Panc1 (cell line): ENCODE measurements at regions of chr19 and their contacts with region 1.

Region 1: DNA sequence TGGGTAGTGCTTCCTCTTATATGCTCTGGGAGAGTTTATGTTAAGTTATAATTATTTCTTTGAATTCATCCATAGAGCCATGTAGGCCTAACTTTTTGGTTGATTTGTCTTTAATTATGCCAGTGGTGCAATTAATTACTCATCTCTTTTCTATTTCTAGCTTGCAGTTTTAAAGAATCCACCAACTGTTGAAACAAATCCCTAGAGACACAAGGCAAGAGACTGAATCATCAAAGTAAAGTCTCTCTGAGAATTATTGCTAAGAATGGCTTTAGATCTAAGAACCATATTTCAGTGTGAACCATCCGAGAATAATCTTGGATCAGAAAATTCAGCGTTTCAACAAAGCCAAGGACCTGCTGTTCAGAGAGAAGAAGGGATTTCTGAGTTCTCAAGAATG is 5.9 kb upstream of the ZNF551 start:
- DNase-seq: no peak
- ATAC-seq: no peak
- H3K4me3 ChIP-seq: no peak overlapping the region
- H3K27ac ChIP-seq: no peak overlapping the region
- H3K4me1 ChIP-seq: no peaks in the 10 kb centered on the region
- H3K27me3 ChIP-seq: no peaks in the 10 kb centered on the region; the same call in 1 of the 2 replicates
- CTCF ChIP-seq: no peak

Region 2: DNA sequence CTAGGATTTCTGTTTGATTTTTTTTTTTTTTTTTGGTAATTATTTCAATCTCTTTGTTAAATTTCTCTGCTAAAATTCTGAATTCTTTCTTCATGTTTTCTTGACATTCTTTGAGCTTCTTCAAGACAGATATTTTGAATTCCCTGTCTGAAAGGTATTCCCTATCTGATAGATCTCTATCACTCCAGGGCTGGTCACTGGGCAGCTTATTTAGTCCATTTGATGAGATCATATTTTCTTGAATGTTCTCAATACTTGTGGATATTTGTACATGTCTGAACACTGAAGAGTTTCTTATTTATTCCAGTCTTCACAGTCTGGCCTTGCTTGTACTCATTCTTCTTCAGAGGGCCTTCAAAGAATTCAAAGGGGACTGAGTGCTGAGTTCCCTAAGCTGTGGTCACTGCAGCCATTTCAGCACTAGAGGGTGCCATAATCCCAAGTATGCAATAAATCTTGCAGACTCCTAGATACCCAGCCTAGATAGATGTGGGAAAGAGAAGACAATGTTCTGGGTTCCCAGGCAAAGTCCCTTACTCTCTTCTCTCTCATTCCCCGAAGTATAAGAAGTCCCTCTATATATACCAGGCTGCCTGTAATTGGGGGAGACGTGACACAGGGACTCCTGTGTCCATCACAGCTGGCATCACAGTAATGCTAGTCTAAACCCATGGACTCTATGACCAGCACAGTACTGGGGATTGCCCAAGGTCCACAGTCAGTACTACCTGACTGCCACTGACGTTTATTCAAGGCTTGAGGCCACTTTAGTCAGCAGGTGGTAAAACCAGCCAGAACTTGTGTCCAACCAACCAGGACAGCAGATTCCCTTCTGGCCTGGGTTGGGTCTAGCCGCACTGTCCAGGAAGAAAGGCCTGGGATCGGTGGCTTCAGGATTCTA is 210.1 kb before region 1 on chr19:
- CTCF ChIA-PET with region 1: no interaction called
- POLR2A ChIA-PET with region 1: interaction called, 15 read pairs
- in situ Hi-C with region 1: no loop called
- intact Hi-C with region 1: no loop called
- DNase-seq: no peak
- ATAC-seq: peak; percentile 88
- H3K4me3 ChIP-seq: no peak overlapping the region
- H3K27ac ChIP-seq: no peak overlapping the region
- H3K4me1 ChIP-seq: no peaks in the 10 kb centered on the region
- H3K27me3 ChIP-seq: no peaks in the 10 kb centered on the region
- CTCF ChIP-seq: peak; percentile 72

Region 3: DNA sequence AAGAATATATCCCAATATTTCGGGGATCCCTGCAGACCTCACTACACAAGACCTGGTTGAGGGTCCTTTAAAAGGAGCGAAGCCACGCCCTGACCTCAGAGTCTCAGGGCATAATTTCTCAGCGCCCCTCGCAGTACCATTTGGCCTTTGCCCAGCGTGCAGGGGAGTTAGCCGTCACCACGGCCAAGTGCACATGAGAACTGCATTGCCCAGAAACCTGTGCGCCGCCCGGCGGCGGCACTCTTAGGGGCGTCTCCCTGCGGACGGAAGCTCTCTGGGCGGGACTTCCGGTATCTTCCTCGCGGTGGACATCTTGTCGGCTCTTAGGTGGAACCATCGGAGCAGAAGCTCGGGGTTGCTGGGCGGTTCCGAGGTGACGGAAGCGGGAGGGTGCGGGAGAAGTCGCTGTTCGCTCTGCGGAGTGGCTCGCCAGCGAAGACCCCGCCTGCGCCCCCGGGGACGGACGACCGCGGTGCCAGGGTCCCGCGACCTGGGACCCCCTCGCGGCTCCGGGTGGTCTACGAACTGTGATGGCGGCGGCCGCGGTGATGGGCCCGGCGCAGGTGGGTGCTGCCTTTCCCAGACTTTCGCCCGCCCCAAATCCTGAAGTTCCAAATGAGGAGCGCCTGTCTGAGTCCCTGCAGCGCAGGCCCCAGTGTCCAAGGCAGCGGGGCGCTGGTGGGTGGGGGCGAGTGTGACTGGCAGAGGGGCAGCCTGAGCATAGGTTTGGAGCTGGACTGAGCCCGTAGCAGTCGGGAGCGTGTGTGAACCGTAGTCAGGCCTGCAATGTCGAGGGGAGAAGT is 61.7 kb before region 1 on chr19 and contains the start of gene ZNF134:
- CTCF ChIA-PET with region 1: no interaction called
- POLR2A ChIA-PET with region 1: no interaction called
- in situ Hi-C with region 1: loop called (anchors 10 kb)
- intact Hi-C with region 1: no loop called
- DNase-seq: peak; percentile 58
- ATAC-seq: peak; percentile 100
- H3K4me3 ChIP-seq: peak within 1 kb of the TSS; percentile 70 to 81
- H3K27ac ChIP-seq: peak within 1 kb of the TSS; percentile 75
- H3K4me1 ChIP-seq: no peaks in the 10 kb centered on the region
- H3K27me3 ChIP-seq: no peaks in the 10 kb centered on the region
- CTCF ChIP-seq: no peak
- total RNA-seq, gene ZNF134: 18.9 TPM

Region 4: DNA sequence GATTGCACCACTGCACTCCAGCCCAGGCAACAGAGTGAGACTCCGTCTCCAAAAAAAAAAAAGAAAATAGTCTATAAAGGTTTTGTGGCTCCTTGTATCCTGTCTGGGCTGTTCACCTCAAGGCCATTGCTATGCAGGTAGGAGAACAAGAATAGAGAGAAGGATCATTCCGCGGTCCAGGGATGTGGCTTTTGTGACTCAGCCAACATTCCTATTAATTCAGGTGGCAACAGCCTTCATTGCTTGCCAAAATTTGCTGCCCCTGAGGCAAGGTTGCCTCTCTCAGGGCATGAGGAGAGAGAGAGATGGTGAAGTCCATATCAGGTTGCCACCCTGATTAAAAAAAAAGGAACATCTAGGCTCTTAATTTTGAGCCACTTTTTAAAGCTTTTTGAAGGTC is 13.9 kb after region 1 on chr19:
- CTCF ChIA-PET with region 1: no interaction called
- POLR2A ChIA-PET with region 1: no interaction called
- in situ Hi-C with region 1: no loop called
- intact Hi-C with region 1: no loop called
- DNase-seq: no peak
- ATAC-seq: no peak
- H3K4me3 ChIP-seq: no peak overlapping the region
- H3K27ac ChIP-seq: no peak overlapping the region
- H3K4me1 ChIP-seq: no peaks in the 10 kb centered on the region
- H3K27me3 ChIP-seq: no peaks in the 10 kb centered on the region
- CTCF ChIP-seq: no peak